Heart left ventricle (tissue), 16 donors: ENCODE measurements at regions of chr14 and their contacts with region 1.

Region 1: GRCh38 chr14:65222440-65222858 is 120.1 kb upstream of the MAX start:
- DNase-seq: peak; percentile 31 to 72 (median 42)
- ATAC-seq: peak; percentile 32 to 79 (median 76)
- H3K4me3 ChIP-seq: no peak overlapping the region
- H3K27ac ChIP-seq: no peak overlapping the region
- H3K4me1 ChIP-seq: peaks cover 0 to 33% (median 2%) of the 10 kb centered on the region in 12 donors
- H3K27me3 ChIP-seq: no peaks in the 10 kb centered on the region
- CTCF ChIP-seq: peak; percentile 65 to 83 (median 76)
- POLR2A ChIP-seq: no peak

Region 2: GRCh38 chr14:65070455-65070976 is 151.9 kb before region 1 on chr14:
- intact Hi-C with region 1: no loop called
- DNase-seq: peak in 2 of 5 donors; percentile 39 to 53
- ATAC-seq: peak in 3 of 4 donors; percentile 4 to 26 (median 10)
- H3K4me3 ChIP-seq: no peak overlapping the region
- H3K27ac ChIP-seq: peak overlapping the region in 10 of 12 donors; percentile 2 to 90 (median 76)
- H3K4me1 ChIP-seq: peaks cover 8 to 64% (median 55%) of the 10 kb centered on the region in 12 donors
- H3K27me3 ChIP-seq: no peaks in the 10 kb centered on the region
- CTCF ChIP-seq: no peak
- POLR2A ChIP-seq: no peak

Region 3: DNA sequence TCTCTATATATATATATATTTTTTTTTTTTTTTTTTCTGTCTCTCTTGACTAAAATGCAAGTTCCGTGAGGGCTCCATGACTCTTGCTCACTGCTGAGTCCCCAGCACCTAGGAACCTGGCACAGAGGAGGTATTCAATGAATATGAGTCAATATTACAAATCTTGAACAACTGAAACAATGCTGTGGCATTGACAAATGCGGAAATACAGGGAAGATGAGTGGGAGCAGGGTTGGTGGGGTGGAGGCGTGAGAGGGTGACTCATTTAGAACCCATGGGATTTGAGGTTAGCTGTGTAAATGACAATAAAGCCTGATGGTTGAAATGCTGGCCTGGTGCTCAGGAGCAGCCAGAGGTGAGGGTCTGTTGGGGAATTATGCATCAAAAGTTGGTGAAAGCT is 68.4 kb after region 1 on chr14:
- intact Hi-C with region 1: no loop called
- DNase-seq: no peak
- ATAC-seq: no peak
- H3K4me3 ChIP-seq: no peak overlapping the region
- H3K27ac ChIP-seq: no peak overlapping the region
- H3K4me1 ChIP-seq: peaks cover 0 to 24% (median 0%) of the 10 kb centered on the region in 12 donors
- H3K27me3 ChIP-seq: no peaks in the 10 kb centered on the region
- CTCF ChIP-seq: no peak
- POLR2A ChIP-seq: no peak

Region 4: GRCh38 chr14:65373679-65374039 is 151.2 kb after region 1 on chr14:
- intact Hi-C with region 1: loop called in 1 of 10 experiments (anchors 10 kb)
- DNase-seq: peak in 1 of 5 donors; percentile 19
- ATAC-seq: peak in 1 of 4 donors; percentile 44
- H3K4me3 ChIP-seq: no peak overlapping the region
- H3K27ac ChIP-seq: no peak overlapping the region
- H3K4me1 ChIP-seq: peaks cover 0 to 7% (median 0%) of the 10 kb centered on the region in 12 donors
- H3K27me3 ChIP-seq: peaks cover 0 to 4% (median 0%) of the 10 kb centered on the region in 9 donors
- CTCF ChIP-seq: peak in 1 of 12 donors; percentile 3
- POLR2A ChIP-seq: no peak

Region 5: GRCh38 chr14:65403231-65403630 is 180.8 kb after region 1 on chr14:
- intact Hi-C with region 1: loop called in 1 of 10 experiments (anchors 10 kb)
- DNase-seq: no peak
- ATAC-seq: no peak
- H3K4me3 ChIP-seq: no peak overlapping the region
- H3K27ac ChIP-seq: no peak overlapping the region
- H3K4me1 ChIP-seq: no peaks in the 10 kb centered on the region
- H3K27me3 ChIP-seq: no peaks in the 10 kb centered on the region
- CTCF ChIP-seq: no peak
- POLR2A ChIP-seq: no peak

Region 6: DNA sequence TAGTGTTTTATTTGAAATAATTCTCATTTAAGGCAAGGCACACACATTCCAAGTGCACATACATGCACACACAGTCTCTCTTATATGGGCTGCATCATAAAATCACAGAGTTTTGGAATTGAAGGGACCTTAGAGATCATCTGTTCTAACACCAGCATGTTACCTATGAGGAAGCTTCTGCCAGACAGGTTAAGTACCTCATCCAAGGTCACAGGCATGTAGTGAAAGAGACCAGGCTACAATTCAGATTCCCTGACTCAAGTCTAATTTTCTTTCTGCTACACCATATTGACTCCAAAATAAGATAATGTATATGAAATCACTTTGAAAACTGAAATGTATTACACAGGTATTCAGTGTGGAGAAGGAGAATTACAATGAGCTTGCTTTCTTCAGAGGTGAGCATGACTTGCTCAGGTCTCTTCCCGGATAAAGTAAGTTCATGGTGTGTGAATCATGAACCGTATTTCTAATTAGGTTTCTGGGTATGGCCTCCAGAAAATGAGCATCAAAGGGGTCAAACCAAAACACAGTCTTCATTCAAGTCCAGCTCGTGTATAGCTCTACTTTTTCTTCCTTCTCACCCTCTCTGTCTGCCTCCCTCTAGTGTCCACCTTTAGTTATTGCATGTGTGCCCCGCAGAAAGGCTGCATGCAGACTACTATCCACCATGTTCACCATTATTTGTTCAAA is 602.0 kb after region 1 on chr14:
- intact Hi-C with region 1: loop called in 4 of 10 experiments (anchors 5 to 10 kb)
- DNase-seq: peak in 2 of 5 donors; percentile 30 to 41
- ATAC-seq: peak in 3 of 4 donors; percentile 76 to 82 (median 80)
- H3K4me3 ChIP-seq: no peak overlapping the region
- H3K27ac ChIP-seq: no peak overlapping the region
- H3K4me1 ChIP-seq: no peaks in the 10 kb centered on the region
- H3K27me3 ChIP-seq: peaks cover 0 to 12% (median 6%) of the 10 kb centered on the region in 9 donors
- CTCF ChIP-seq: peak; percentile 86 to 96 (median 90)
- POLR2A ChIP-seq: no peak